Motor neuron (in vitro differentiated cells): ENCODE measurements at regions of chr10 and their contacts with region 1.

Region 1: DNA sequence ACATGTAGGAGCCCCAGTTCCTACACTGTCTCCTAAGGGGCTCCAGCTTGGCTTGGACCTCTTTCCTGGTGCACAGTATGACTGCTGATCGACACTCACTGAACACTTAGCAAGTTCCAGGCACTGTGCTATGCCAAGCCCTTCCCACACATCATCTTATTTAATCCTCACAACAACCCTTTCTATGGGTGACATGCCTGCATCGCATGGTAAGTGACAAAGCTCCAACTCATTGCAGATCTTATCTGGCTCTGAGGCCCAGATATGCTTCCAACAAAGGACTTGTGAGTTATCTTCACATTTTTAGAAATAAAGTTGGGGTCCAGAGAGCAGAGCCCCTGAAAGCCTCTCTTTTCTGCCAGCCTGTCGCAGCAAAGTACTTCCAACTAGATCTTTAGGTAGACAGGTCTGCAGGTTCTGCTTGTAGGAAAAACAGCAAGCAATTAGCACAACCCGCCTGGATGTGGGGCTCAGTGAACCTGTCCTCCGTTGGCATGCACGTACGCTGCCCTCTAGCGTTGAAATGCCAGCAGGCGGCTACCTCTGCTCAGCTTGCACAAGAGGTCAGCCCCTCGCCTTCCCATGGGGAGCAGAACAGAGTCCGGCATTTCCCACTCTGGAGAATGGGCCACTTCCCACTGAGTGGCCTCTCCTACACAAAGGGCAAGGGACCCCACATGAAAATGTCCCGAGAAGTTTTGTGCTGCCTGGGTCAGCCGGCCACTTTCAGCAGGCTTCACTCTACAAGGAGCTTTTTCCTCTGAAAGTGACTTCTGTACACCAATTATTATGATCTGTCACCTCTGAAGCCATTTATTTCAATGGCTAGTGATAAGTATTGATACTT is 57.1 kb downstream of the JCAD start:
- ATAC-seq: peak; percentile 80 to 98 (median 90)
- H3K4me3 ChIP-seq: no peak overlapping the region
- H3K27ac ChIP-seq: no peak overlapping the region
- H3K4me1 ChIP-seq: peaks cover 0 to 3% of the 10 kb centered on the region in 2 donors

Region 2: GRCh38 chr10:30231071-30231652 is 228.8 kb after region 1 on chr10:
- in situ Hi-C with region 1: loop called in 1 of 9 experiments (anchors 10 kb)
- ATAC-seq: no peak
- H3K4me3 ChIP-seq: no peak overlapping the region
- H3K27ac ChIP-seq: no peak overlapping the region
- H3K4me1 ChIP-seq: no peaks in the 10 kb centered on the region

Region 3: DNA sequence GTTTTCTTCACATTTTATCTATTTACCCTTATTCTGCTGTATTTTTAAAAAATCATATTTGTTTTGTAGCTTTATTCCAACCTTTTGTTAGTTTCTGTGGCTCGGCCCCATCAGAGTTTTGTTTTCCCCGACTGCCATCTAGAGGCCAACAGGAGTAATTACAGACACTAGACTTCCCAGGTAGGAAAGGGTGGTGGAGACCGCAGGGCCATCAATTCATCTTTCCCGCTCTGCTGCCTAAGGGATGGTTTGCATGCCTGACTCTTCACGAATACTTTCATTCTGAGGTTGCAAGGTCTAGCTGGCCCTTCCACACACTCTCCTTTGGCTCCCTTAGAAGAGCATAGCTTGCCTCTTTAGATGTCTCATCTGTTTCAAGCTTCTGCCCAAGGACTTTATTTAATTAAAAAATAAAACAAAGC is 588.9 kb after region 1 on chr10:
- in situ Hi-C with region 1: loop called in 1 of 9 experiments (anchors 25 kb)
- ATAC-seq: peak; percentile 52 to 75 (median 68)
- H3K4me3 ChIP-seq: no peak overlapping the region
- H3K27ac ChIP-seq: no peak overlapping the region
- H3K4me1 ChIP-seq: peaks cover 3 to 7% of the 10 kb centered on the region in 2 donors